Activated T-helper 1 cell treated with anti-CD3 and anti-CD28 coated beads, Interleukin-12 subunit alpha, Interleukin-12 subunit beta, Interleukin-2, Interleukin-4 antibody, amounts not matched to agents 30 ng/mL and 10 ng/mL and 1 ng/mL, durations not matched to agents 14 hours and 24 hours and 36 hours (primary cell): ENCODE measurements at regions of chr12 and their contacts with region 1.

Region 1: DNA sequence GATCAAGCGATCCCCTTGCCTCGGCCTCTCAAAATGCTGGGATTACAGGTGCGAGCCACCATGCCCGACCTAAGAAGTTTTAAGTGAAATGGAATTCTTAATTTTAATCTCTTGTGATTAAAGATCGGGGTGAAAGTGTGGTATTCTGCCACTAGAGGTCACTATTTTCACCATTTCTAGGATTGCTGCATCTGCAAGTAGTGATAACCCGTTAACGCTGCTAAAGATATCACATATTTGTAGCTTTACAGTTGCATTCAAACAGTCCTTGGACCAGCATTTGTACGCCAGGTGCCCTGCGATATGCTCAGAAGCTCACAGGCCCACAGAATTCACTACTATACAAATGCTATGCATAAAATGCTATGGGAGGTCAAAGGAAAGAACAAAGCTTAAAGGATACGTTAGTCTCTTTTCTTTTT is 19.3 kb downstream of the CCDC62 start:
- DNase-seq: no peak
- H3K4me3 Mint-ChIP-seq: no peak overlapping the region
- H3K27ac Mint-ChIP-seq: no peak overlapping the region
- H3K4me1 Mint-ChIP-seq: peaks cover 4% of the 10 kb centered on the region
- H3K27me3 Mint-ChIP-seq: no peaks in the 10 kb centered on the region

Region 2: DNA sequence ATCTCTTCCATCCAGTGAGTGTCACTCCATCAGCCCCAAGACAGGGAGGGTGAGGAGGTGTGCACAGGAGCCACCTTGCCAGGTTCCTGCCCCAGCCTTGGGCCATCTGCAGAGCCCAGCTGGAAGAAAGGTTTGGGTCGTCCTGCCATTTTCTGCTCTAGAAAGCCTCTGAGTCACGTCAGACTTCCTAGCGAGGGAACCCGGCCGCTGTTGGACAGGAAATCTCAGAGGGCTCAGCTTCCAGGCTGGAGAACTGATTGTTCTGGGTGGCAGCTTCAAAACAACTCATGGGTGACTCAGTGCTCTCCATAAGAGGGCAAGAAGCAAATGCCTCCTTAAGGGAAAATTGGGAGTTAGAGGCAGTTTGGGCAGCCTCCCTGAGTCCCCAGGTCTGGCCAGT is 58.1 kb after region 1 on chr12:
- intact Hi-C with region 1: no loop called
- DNase-seq: no peak
- H3K4me3 Mint-ChIP-seq: no peak overlapping the region
- H3K27ac Mint-ChIP-seq: no peak overlapping the region
- H3K4me1 Mint-ChIP-seq: no peaks in the 10 kb centered on the region
- H3K27me3 Mint-ChIP-seq: no peaks in the 10 kb centered on the region

Region 3: GRCh38 chr12:122951979-122952892 is 158.5 kb after region 1 on chr12:
- intact Hi-C with region 1: loop called (anchors 1 kb)
- DNase-seq: peak; percentile 63
- H3K4me3 Mint-ChIP-seq: no peak overlapping the region
- H3K27ac Mint-ChIP-seq: no peak overlapping the region
- H3K4me1 Mint-ChIP-seq: peaks cover 16% of the 10 kb centered on the region
- H3K27me3 Mint-ChIP-seq: peaks cover 1% of the 10 kb centered on the region